ENCODE measurements at regions of chr2 and their contacts with region 1.

Region 1: DNA sequence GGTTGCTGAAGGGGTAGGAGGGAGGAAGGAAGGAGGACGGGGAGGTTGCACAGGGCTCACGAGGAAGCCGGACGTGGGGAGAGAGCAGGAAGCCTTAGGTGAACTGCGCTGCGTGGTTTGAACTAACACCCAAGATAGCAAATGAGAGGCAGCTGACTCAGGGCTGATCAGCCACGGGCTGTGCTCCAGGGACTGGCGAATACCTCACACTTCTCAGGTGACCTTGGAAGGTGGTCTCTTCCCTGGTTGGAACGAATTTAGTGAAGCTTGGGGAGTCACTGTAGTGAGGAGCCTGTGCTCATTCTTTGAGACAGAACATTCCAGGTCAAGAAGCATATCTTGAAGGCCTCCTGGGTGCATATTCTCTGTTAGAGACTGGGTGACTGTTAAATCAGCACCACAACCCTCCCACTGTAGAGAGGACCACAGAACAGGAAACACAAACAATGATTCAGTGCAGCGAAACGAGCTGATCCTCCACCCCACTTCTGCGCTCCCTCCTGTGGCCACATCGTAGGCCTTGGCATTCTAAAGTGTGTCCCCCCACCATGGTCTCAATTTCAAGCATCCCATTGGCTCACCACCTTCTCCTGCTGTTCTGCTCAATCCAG is 33.8 kb downstream of the TOGARAM2 start:
- DNase-seq: peak; percentile 34
- H3K4me3 ChIP-seq: no peak overlapping the region
- H3K27ac ChIP-seq: no peak overlapping the region
- H3K4me1 ChIP-seq: no peaks in the 10 kb centered on the region
- H3K27me3 ChIP-seq: no peaks in the 10 kb centered on the region
- CTCF ChIP-seq: no peak

Region 2: DNA sequence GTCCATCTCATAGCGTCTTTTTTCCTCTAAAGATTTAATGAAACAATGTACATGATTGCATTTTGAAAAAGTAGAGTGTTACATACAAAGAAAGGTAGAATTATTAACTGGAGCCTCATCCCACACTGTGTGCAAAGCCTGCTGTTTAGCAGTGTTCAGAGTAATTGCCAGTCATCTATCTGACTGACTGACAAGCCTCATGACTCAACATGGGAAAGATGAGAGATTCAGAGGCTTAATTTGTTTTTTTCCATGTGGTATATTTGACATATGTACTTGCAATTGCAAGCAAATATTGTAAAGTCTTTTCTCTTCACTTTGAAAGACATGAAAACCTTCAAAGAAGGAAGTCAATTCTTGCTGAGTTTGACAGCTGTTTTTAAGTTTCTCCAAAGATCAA is 44.7 kb after region 1 on chr2:
- CTCF ChIA-PET with region 1: no interaction called
- dilution Hi-C with region 1: loop called (anchors 5 kb)
- in situ Hi-C with region 1: no loop called
- intact Hi-C with region 1: no loop called
- DNase-seq: no peak
- H3K4me3 ChIP-seq: no peak overlapping the region
- H3K27ac ChIP-seq: no peak overlapping the region
- H3K4me1 ChIP-seq: peaks cover 12% of the 10 kb centered on the region
- H3K27me3 ChIP-seq: no peaks in the 10 kb centered on the region
- CTCF ChIP-seq: no peak

Measured in mammary epithelial cell (primary cell).